ENCODE measurements at regions of chr5 and their contacts with region 1.

Region 1: GRCh38 chr5:109589986-109590385 is 99.7 kb upstream of the MAN2A1 start:
- DNase-seq: no peak
- ATAC-seq: no peak
- H3K4me3 ChIP-seq: no peak overlapping the region
- H3K27ac ChIP-seq: no peak overlapping the region
- H3K4me1 ChIP-seq: peaks cover 0 to 6% (median 0%) of the 10 kb centered on the region in 9 donors
- H3K27me3 ChIP-seq: no peaks in the 10 kb centered on the region
- CTCF ChIP-seq: no peak

Region 2: DNA sequence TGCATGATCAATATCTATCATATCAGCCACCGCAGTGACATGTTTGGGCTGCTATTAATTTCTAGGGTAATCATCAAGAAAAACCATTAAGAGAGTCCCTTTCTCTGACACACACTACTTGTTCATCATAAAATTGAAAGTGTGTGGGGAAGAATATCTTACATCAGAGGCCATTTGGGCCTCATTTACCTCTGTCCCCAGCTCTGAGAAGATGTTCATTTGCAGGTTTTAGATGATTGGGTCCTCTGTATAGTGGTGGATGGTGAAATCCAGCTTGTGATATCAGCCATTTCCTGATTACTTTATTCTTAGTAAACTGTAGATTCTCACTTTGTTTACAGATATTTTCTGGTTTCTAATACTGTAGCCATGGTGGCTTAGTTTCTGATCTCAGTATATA is 150.4 kb before region 1 on chr5:
- intact Hi-C with region 1: no loop called
- DNase-seq: no peak
- ATAC-seq: no peak
- H3K4me3 ChIP-seq: no peak overlapping the region
- H3K27ac ChIP-seq: no peak overlapping the region
- H3K4me1 ChIP-seq: no peaks in the 10 kb centered on the region
- H3K27me3 ChIP-seq: no peaks in the 10 kb centered on the region
- CTCF ChIP-seq: no peak

Region 3: GRCh38 chr5:109574985-109575384 is 15.0 kb before region 1 on chr5:
- intact Hi-C with region 1: loop called in 1 of 10 experiments (anchors 1 kb)
- DNase-seq: no peak
- ATAC-seq: no peak
- H3K4me3 ChIP-seq: no peak overlapping the region
- H3K27ac ChIP-seq: no peak overlapping the region
- H3K4me1 ChIP-seq: no peaks in the 10 kb centered on the region
- H3K27me3 ChIP-seq: peaks cover 0 to 4% (median 0%) of the 10 kb centered on the region in 7 donors
- CTCF ChIP-seq: no peak

Region 4: GRCh38 chr5:109703829-109704228 is 113.8 kb after region 1 on chr5:
- intact Hi-C with region 1: no loop called
- DNase-seq: no peak
- ATAC-seq: peak in 2 of 8 donors; percentile 26 to 29
- H3K4me3 ChIP-seq: no peak overlapping the region
- H3K27ac ChIP-seq: no peak overlapping the region
- H3K4me1 ChIP-seq: peaks cover 0 to 37% (median 22%) of the 10 kb centered on the region in 9 donors
- H3K27me3 ChIP-seq: no peaks in the 10 kb centered on the region
- CTCF ChIP-seq: no peak